ENCODE measurements at regions of chr3 and their contacts with region 1.

Region 1: GRCh38 chr3:196942226-196942914 is at the start of gene NCBP2:
- DNase-seq: peak; percentile 98 to 100 (median 100)
- ATAC-seq: peak; percentile 91
- H3K4me3 ChIP-seq: peak within 1 kb of the TSS; percentile 87 to 91
- H3K4me3 Mint-ChIP-seq: peak within 1 kb of the TSS; percentile 90
- H3K27ac ChIP-seq: peak within 1 kb of the TSS; percentile 95 to 96
- H3K27ac Mint-ChIP-seq: peak within 1 kb of the TSS; percentile 97
- H3K4me1 ChIP-seq: peaks cover 18% of the 10 kb centered on the region
- H3K4me1 Mint-ChIP-seq: peaks cover 44% of the 10 kb centered on the region
- H3K27me3 ChIP-seq: no peaks in the 10 kb centered on the region
- H3K27me3 Mint-ChIP-seq: no peaks in the 10 kb centered on the region
- CTCF ChIP-seq: peak; percentile 59
- total RNA-seq, gene NCBP2: 40.4 to 42.9 TPM

Region 2: DNA sequence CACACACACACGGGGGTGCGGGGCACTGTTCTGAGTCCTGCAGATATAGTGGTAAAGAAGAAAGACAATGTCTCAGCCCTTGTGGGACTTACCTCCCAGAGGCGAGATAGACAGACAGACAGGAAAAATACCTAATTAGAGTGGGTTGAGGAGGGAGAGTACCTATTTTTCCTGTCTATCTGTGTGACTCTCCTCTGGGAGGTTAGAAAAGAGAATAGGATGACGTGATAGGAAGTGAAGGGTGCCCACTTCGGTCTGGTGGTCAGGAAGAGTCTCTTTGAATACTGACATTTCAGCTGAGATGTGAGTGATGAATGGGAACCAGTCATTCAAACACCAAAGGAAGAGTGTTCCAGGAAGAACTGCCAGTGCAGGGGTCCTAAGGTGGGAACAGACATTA is 1354.5 kb before region 1 on chr3:
- CTCF ChIA-PET with region 1: no interaction called
- POLR2A ChIA-PET with region 1: no interaction called
- intact Hi-C with region 1: no loop called
- DNase-seq: peak in 1 of 9 experiments; percentile 13
- ATAC-seq: no peak
- H3K4me3 ChIP-seq: no peak overlapping the region
- H3K4me3 Mint-ChIP-seq: no peak overlapping the region
- H3K27ac ChIP-seq: no peak overlapping the region
- H3K27ac Mint-ChIP-seq: no peak overlapping the region
- H3K4me1 ChIP-seq: peaks cover 27% of the 10 kb centered on the region
- H3K4me1 Mint-ChIP-seq: peaks cover 5% of the 10 kb centered on the region
- H3K27me3 ChIP-seq: no peaks in the 10 kb centered on the region
- H3K27me3 Mint-ChIP-seq: no peaks in the 10 kb centered on the region
- CTCF ChIP-seq: no peak

Region 3: DNA sequence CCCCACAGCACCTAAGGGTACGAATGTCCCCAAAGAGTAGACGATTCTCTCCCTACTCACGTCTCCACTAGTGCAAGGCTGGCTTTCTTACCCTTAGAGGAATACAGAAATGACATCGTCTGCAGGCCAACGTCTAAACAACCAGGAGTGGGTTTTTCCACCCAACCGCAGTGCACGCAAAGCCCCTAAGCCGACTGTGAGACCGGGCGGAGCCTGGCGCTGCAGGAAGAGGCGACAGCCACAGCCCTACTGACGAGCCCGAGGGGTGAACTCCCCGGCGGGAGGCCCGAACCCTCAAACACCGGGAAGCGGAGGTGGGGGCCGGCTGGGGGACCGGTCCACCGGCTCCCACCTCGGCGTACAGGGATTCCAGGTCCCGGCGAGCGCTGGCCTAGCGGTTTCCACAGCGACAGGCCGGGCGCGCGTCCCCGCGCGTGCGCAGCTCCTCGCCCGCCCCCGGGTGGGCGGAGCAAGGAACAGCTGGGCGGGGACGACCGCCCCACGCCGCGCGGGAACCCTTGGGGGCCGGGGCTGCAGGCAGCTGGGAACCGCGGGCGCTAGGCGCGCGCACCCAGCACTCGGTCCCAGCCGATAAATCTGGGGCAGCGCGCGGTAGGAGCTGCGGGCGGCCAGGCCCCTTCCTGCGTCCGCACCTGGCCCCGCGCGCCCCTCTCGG is 230.4 kb before region 1 on chr3 and contains the starts of genes CEP19 and PIGX:
- CTCF ChIA-PET with region 1: no interaction called
- POLR2A ChIA-PET with region 1: no interaction called
- intact Hi-C with region 1: loop called in 1 of 2 experiments (anchors 5 kb)
- DNase-seq: peak; percentile 77 to 99 (median 91)
- ATAC-seq: peak; percentile 83
- H3K4me3 ChIP-seq: peak within 1 kb of the TSS; percentile 72 to 93
- H3K4me3 Mint-ChIP-seq: peak within 1 kb of the TSS; percentile 88
- H3K27ac ChIP-seq: peak within 1 kb of the TSS; percentile 90 to 98
- H3K27ac Mint-ChIP-seq: peak within 1 kb of the TSS; percentile 98
- H3K4me1 ChIP-seq: peaks cover 17% of the 10 kb centered on the region
- H3K4me1 Mint-ChIP-seq: peaks cover 31% of the 10 kb centered on the region
- H3K27me3 ChIP-seq: no peaks in the 10 kb centered on the region
- H3K27me3 Mint-ChIP-seq: no peaks in the 10 kb centered on the region
- CTCF ChIP-seq: no peak
- total RNA-seq, gene CEP19: 0.39 to 0.41 TPM
- total RNA-seq, gene PIGX: 12.0 to 12.2 TPM

Region 4: DNA sequence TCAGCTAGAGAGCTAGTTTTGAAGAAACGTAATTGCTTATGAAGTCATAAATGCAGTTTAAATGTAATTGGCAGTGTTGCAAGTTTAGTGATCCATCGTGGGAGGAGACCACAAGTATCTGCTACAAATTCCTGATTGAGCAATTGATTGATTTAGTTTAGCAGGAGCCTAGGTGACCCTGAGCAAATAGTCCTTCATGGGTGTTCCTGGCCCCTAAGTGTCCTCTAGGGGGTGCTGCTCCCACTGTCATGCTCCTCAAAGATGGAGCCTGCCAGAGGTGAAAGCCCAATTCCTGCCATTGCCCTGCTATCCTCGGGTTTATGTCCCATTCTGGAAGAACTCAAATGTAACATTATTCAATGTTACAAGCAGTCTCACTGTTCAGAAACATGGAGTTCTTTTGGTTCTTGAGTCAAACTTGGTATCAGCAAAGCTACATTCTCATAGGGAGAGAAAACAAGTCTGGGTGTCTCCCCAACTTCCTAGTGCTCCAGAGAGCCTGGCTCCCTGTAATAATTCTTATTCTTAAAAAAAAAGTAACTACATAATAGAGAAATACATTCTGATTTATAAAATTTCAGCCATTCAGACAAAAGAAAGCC is 104.5 kb before region 1 on chr3:
- CTCF ChIA-PET with region 1: interaction called, 7 read pairs
- POLR2A ChIA-PET with region 1: no interaction called
- intact Hi-C with region 1: loop called in 1 of 2 experiments (anchors 1 kb)
- DNase-seq: peak; percentile 39 to 85 (median 75)
- ATAC-seq: peak; percentile 96
- H3K4me3 ChIP-seq: no peak overlapping the region
- H3K4me3 Mint-ChIP-seq: no peak overlapping the region
- H3K27ac ChIP-seq: no peak overlapping the region
- H3K27ac Mint-ChIP-seq: no peak overlapping the region
- H3K4me1 ChIP-seq: no peaks in the 10 kb centered on the region
- H3K4me1 Mint-ChIP-seq: peaks cover 2% of the 10 kb centered on the region
- H3K27me3 ChIP-seq: no peaks in the 10 kb centered on the region
- H3K27me3 Mint-ChIP-seq: no peaks in the 10 kb centered on the region
- CTCF ChIP-seq: peak; percentile 83

Region 5: DNA sequence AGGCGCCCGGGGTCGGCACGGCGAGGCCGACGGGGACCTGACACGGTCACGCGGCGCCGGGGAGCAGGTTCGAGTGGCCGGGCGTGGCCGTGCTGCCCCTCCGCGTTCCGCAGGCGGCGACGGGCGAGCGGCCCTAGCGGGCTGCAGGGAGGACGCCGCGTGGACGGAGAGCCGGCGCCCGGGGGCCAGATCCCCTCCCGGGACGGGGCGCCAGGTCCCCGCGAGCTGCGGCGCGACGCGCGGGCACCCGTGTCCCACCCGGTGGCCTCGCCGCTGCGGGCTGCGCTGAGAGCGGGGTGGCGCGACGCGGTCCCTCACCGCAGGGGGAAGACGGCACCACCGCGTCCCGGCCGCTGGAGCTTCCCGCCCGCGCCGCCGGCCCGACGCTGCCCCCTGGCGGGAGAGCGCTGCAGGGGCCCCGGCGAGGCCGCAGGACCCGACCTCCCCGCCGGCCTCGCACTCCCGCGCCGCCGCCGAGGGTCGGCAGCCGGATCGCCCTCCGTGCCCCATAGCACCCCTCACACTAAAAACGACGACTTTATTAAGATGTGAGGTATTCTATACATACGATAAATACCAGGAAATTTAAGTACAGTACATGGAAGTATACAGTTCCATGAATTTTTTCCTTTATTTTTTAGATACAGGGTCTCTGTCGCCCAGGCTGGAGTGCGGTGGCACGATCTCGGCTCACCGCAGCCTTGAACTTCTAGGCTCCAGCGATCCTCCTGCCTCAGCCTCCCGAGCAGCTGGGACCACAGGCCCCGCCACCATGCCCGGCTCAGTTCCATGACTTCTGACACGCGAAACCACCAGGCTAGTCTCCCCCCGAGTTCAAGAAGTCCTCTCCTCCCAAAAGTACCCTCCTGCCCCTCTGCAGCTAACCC is 27.5 kb after region 1 on chr3:
- CTCF ChIA-PET with region 1: interaction called, 5 read pairs
- POLR2A ChIA-PET with region 1: interaction called, 10 read pairs
- intact Hi-C with region 1: loop called (anchors 2 kb)
- DNase-seq: peak; percentile 29 to 82 (median 61)
- ATAC-seq: peak; percentile 72
- H3K4me3 ChIP-seq: peak overlapping the region in 1 of 2 experiments; percentile 65
- H3K4me3 Mint-ChIP-seq: peak overlapping the region; percentile 77
- H3K27ac ChIP-seq: no peak overlapping the region
- H3K27ac Mint-ChIP-seq: no peak overlapping the region
- H3K4me1 ChIP-seq: peaks cover 13% of the 10 kb centered on the region
- H3K4me1 Mint-ChIP-seq: peaks cover 4% of the 10 kb centered on the region
- H3K27me3 ChIP-seq: no peaks in the 10 kb centered on the region
- H3K27me3 Mint-ChIP-seq: peaks cover 11% of the 10 kb centered on the region
- CTCF ChIP-seq: peak; percentile 63

Region 6: GRCh38 chr3:197151569-197151968 is 209.2 kb after region 1 on chr3:
- CTCF ChIA-PET with region 1: no interaction called
- POLR2A ChIA-PET with region 1: no interaction called
- intact Hi-C with region 1: no loop called
- DNase-seq: no peak
- ATAC-seq: no peak
- H3K4me3 ChIP-seq: no peak overlapping the region
- H3K4me3 Mint-ChIP-seq: no peak overlapping the region
- H3K27ac ChIP-seq: no peak overlapping the region
- H3K27ac Mint-ChIP-seq: no peak overlapping the region
- H3K4me1 ChIP-seq: no peaks in the 10 kb centered on the region
- H3K4me1 Mint-ChIP-seq: peaks cover 14% of the 10 kb centered on the region
- H3K27me3 ChIP-seq: no peaks in the 10 kb centered on the region
- H3K27me3 Mint-ChIP-seq: no peaks in the 10 kb centered on the region
- CTCF ChIP-seq: no peak

Region 7: GRCh38 chr3:197298341-197298857 is 356.0 kb after region 1 on chr3 and contains the start of gene DLG1:
- CTCF ChIA-PET with region 1: no interaction called
- POLR2A ChIA-PET with region 1: no interaction called
- intact Hi-C with region 1: loop called in 1 of 2 experiments (anchors 10 kb)
- DNase-seq: peak; percentile 52 to 88 (median 77)
- ATAC-seq: peak; percentile 62
- H3K4me3 ChIP-seq: peak within 1 kb of the TSS; percentile 95 to 97
- H3K4me3 Mint-ChIP-seq: peak within 1 kb of the TSS; percentile 91
- H3K27ac ChIP-seq: peak within 1 kb of the TSS; percentile 62 to 76
- H3K27ac Mint-ChIP-seq: peak within 1 kb of the TSS; percentile 94
- H3K4me1 ChIP-seq: peaks cover 16% of the 10 kb centered on the region
- H3K4me1 Mint-ChIP-seq: peaks cover 43% of the 10 kb centered on the region
- H3K27me3 ChIP-seq: no peaks in the 10 kb centered on the region
- H3K27me3 Mint-ChIP-seq: peaks cover 2% of the 10 kb centered on the region
- CTCF ChIP-seq: no peak
- total RNA-seq, gene DLG1: 70.9 to 72.9 TPM